Astrocyte of the cerebellum (primary cell): ENCODE measurements at regions of chr11 and their contacts with region 1.

Region 1: GRCh38 chr11:9748361-9748970 is 84.6 kb downstream of the SWAP70 start:
- DNase-seq: peak; percentile 55
- H3K4me3 ChIP-seq: no peak overlapping the region
- CTCF ChIP-seq: peak; percentile 78

Region 2: DNA sequence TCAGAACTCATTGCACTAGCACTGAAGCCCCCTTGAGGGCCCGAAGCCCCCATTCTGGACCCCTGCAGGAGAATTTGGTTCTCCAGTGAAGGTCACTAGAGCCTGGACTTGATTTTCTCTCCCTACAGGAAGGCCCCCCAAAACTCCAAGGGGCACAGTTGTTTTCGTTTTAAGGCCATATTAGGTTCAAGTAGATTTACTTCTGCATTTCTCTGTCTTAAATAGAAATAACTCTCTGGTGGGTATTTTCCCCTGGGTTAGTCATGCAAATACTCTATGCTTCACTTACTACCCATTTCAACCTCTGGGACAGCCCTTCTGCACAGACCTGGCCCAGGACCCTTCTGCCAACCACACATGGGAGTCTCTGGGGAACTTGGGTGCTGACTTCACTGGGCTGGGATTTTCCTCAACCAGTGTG is 133.4 kb before region 1 on chr11:
- in situ Hi-C with region 1: loop called (anchors 5 kb)
- DNase-seq: no peak
- H3K4me3 ChIP-seq: no peak overlapping the region
- CTCF ChIP-seq: no peak

Region 3: GRCh38 chr11:9672288-9672916 is 76.1 kb before region 1 on chr11:
- in situ Hi-C with region 1: loop called (anchors 10 kb)
- DNase-seq: no peak
- H3K4me3 ChIP-seq: no peak overlapping the region
- CTCF ChIP-seq: no peak

Region 4: GRCh38 chr11:10304495-10305213 is 556.2 kb after region 1 on chr11 and contains the start of gene ADM:
- in situ Hi-C with region 1: loop called (anchors 5 kb)
- DNase-seq: peak; percentile 82
- H3K4me3 ChIP-seq: peak within 1 kb of the TSS; percentile 84
- CTCF ChIP-seq: peak; percentile 49